Right cardiac atrium (tissue), 5 donors: ENCODE measurements at regions of chr15 and their contacts with region 1.

Region 1: DNA sequence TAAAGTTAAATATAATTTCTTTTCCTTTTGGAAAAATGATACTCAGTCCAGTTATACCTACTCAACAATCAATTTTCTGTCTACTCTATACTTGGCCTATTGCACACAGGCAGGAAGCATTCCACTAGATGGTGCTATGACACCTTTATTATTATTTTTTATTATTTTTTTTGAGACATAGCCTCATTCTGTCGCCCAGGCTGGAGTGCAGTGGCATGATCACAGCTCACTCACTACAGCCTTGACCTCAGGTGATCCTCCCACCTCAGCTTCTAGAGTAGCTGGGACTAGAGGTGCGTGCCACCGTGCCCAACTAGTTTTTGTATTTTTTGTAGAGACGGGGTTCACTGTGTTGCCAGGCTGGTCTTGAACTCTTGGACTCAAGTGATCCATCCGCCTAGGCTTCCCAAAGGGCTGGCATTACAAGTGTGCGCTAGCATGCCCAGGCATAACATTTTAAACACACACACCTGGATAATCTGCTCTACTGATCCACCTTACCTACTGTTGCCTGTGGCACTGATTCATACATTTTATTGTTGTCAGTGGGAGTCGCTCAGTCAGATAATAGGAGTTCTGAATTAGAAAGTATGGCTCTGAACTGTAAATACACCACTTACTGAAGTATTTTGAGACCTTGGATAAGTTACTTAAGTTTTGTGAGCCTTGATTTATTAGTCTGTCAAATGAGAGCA is 56.2 kb downstream of the EIF3J start:
- DNase-seq: no peak
- ATAC-seq: no peak
- H3K4me3 ChIP-seq: no peak overlapping the region
- H3K27ac ChIP-seq: no peak overlapping the region
- H3K4me1 ChIP-seq: no peaks in the 10 kb centered on the region
- H3K27me3 ChIP-seq: no peaks in the 10 kb centered on the region

Region 2: GRCh38 chr15:44275150-44275830 is 317.9 kb before region 1 on chr15:
- intact Hi-C with region 1: no loop called
- DNase-seq: no peak
- ATAC-seq: no peak
- H3K4me3 ChIP-seq: no peak overlapping the region
- H3K27ac ChIP-seq: no peak overlapping the region
- H3K4me1 ChIP-seq: no peaks in the 10 kb centered on the region
- H3K27me3 ChIP-seq: no peaks in the 10 kb centered on the region

Region 3: DNA sequence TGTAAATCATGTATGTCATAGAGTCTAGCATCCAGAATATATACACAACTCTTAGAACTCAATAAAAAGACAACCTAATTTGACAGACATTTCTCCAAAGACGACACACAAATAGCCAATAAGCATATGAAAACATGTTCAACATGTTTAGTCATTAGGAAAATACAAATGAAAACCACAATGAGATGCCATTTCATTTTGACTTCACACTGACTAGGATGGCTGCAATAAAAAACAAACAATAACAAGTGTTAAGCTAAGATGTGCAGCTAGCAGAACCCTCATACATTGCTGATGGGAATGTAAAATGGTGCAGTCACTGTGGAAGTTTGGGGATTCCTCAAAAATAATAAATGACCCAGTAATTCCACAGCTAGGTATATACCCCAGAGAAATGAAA is 53.8 kb after region 1 on chr15:
- intact Hi-C with region 1: loop called in 1 of 4 experiments (anchors 10 kb)
- DNase-seq: no peak
- ATAC-seq: no peak
- H3K4me3 ChIP-seq: no peak overlapping the region
- H3K27ac ChIP-seq: no peak overlapping the region
- H3K4me1 ChIP-seq: no peaks in the 10 kb centered on the region
- H3K27me3 ChIP-seq: no peaks in the 10 kb centered on the region

Region 4: DNA sequence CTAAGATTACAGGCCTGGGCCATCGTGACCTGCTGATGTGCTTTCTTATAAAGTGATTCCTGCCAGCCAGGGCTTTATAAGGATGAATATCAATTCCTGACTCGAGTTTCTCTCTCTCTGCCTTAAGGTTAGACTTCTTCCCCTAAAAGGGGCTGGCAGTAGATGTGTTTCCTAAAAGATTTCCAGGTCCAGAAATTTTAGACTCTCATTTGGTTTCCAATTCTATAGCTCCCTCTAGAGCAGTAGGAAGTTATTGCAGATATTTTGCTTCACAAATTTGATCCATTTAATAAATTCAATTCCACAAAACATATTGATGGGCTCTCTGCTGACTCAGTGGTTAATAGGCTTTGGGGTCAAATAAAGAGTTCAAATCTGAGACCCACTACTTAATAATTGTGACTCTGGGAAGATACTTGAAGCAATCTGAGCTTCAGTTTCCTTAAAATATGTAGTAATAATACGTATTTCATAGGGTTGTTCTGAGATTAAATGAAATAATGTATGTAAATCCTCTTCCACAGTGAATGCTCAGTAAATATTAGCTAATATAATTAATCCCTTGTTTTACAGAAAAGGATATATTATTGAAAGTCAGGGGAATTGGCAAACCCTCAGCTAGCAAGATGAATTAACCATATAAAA is 145.3 kb after region 1 on chr15:
- intact Hi-C with region 1: loop called in 1 of 4 experiments (anchors 10 kb)
- DNase-seq: no peak
- ATAC-seq: peak; percentile 26 to 31
- H3K4me3 ChIP-seq: no peak overlapping the region
- H3K27ac ChIP-seq: no peak overlapping the region
- H3K4me1 ChIP-seq: no peaks in the 10 kb centered on the region
- H3K27me3 ChIP-seq: no peaks in the 10 kb centered on the region